MCF 10A (cell line): ENCODE measurements at regions of chr6 and their contacts with region 1.

Region 1: DNA sequence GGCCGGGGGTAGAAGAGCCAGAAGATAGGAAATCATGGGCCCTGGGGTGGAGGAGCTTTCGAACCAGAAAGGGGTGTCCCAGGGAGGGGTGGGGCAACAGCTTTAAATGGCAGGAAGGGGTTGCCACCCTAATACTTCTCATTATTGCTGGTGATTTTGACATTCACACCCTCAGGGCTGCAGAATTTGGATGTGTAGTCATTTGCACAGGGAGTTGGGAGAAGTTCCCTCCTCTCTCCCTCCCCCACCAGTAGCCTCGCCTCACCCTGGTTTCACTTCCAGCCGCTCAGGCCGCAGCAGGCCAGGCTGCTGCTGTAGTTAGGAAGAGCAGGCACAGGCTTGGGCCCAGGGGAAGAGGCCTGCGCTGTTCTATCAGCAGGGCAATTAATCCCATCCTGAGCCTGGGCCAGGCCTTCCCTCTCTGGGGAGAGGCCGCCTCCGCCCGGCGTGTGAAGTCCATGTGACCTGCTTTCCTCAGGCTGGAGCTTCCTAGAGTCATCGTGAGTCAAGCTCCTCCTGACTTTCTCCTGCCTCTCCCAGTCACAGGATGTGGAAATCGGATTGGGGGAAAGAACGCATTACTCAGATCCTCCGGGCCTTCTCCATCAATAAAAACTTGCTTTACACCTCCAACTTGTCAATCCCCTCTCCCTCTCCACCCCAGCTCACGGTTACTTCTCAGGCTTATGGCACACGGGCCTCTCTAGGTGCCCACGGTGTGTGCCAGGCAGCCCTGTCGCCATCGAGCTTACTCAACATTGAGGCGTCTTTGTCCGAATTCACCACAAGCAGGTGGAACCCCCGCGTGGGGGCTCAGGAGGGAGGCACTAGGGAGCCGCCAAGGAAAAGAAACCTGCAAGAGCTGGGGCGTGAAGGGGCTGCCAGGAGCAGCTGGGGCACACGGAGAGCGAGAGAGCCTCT is 7.8 kb downstream of the ADTRP start:
- DNase-seq: peak; percentile 100
- H3K4me3 Mint-ChIP-seq: peak overlapping the region; percentile 69
- H3K27ac Mint-ChIP-seq: peak overlapping the region; percentile 96
- H3K4me1 Mint-ChIP-seq: peaks cover 61% of the 10 kb centered on the region
- H3K27me3 Mint-ChIP-seq: no peaks in the 10 kb centered on the region
- CTCF ChIP-seq: no peak

Region 2: GRCh38 chr6:11700118-11700718 is 70.6 kb before region 1 on chr6:
- CTCF ChIA-PET with region 1: interaction called, 10 read pairs
- POLR2A ChIA-PET with region 1: interaction called, 37 read pairs
- intact Hi-C with region 1: loop called (anchors 1 kb)
- DNase-seq: peak; percentile 68
- H3K4me3 Mint-ChIP-seq: no peak overlapping the region
- H3K27ac Mint-ChIP-seq: no peak overlapping the region
- H3K4me1 Mint-ChIP-seq: peaks cover 25% of the 10 kb centered on the region
- H3K27me3 Mint-ChIP-seq: no peaks in the 10 kb centered on the region
- CTCF ChIP-seq: peak; percentile 37

Region 3: GRCh38 chr6:11760015-11760473 is 10.8 kb before region 1 on chr6:
- CTCF ChIA-PET with region 1: no interaction called
- POLR2A ChIA-PET with region 1: interaction called, 13 read pairs
- intact Hi-C with region 1: no loop called
- DNase-seq: no peak
- H3K4me3 Mint-ChIP-seq: no peak overlapping the region
- H3K27ac Mint-ChIP-seq: no peak overlapping the region
- H3K4me1 Mint-ChIP-seq: peaks cover 19% of the 10 kb centered on the region
- H3K27me3 Mint-ChIP-seq: no peaks in the 10 kb centered on the region
- CTCF ChIP-seq: no peak

Region 4: DNA sequence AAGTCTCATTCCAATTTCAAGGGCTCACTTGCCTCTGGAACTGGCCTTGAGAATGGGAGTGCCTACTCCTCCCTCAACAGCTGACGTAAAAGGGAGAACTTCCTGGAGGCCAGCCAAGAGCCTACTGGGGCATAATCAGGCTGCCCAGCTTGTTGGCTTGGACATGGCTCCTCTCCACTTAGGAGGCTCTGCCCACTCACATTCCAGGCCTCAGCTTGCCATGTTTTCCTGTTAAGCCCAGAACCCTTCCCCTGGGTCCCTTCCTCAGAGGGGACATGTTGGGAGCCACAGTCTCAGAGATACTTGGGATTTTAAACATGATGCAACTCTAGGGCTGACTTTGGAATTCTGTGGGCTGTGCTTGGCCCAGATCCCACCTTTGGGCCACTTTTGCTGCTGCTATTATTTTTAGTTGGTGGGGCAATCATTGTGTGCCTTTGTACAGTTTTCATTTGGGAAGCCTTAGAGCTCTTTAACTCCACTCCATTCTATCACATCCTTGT is 39.3 kb after region 1 on chr6:
- CTCF ChIA-PET with region 1: interaction called, 3 read pairs
- POLR2A ChIA-PET with region 1: interaction called, 53 read pairs
- intact Hi-C with region 1: loop called (anchors 1 kb)
- DNase-seq: peak; percentile 98
- H3K4me3 Mint-ChIP-seq: peak overlapping the region; percentile 28
- H3K27ac Mint-ChIP-seq: peak overlapping the region; percentile 86
- H3K4me1 Mint-ChIP-seq: peaks cover 43% of the 10 kb centered on the region
- H3K27me3 Mint-ChIP-seq: no peaks in the 10 kb centered on the region
- CTCF ChIP-seq: no peak

Region 5: GRCh38 chr6:11921017-11921438 is 150.2 kb after region 1 on chr6:
- CTCF ChIA-PET with region 1: no interaction called
- POLR2A ChIA-PET with region 1: interaction called, 14 read pairs
- intact Hi-C with region 1: loop called (anchors 1 kb)
- DNase-seq: peak; percentile 86
- H3K4me3 Mint-ChIP-seq: no peak overlapping the region
- H3K27ac Mint-ChIP-seq: peak overlapping the region; percentile 76
- H3K4me1 Mint-ChIP-seq: peaks cover 17% of the 10 kb centered on the region
- H3K27me3 Mint-ChIP-seq: no peaks in the 10 kb centered on the region
- CTCF ChIP-seq: no peak

Region 6: DNA sequence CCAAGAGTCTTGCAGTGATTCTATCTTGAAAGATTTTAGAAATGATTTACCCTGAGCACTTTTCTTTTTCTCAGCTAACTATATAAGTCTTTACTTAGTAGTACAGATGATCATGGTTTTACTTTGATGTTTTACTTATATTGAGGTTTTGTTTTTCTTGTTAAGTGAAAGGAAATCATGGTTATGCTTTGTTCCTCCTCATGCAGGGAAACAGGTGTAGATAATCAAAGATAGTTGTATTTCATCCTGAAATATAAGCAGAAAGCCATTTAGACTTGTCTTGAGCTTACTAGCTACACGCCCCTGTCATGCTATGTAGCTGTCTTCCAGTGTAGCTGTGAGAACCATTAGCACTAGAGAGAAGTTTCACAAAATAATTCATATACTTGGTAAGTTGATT is 355.2 kb after region 1 on chr6:
- CTCF ChIA-PET with region 1: no interaction called
- POLR2A ChIA-PET with region 1: no interaction called
- intact Hi-C with region 1: no loop called
- DNase-seq: no peak
- H3K4me3 Mint-ChIP-seq: no peak overlapping the region
- H3K27ac Mint-ChIP-seq: no peak overlapping the region
- H3K4me1 Mint-ChIP-seq: no peaks in the 10 kb centered on the region
- H3K27me3 Mint-ChIP-seq: no peaks in the 10 kb centered on the region
- CTCF ChIP-seq: no peak